PC-3 (cell line): ENCODE measurements at regions of chr1 and their contacts with region 1.

Region 1: DNA sequence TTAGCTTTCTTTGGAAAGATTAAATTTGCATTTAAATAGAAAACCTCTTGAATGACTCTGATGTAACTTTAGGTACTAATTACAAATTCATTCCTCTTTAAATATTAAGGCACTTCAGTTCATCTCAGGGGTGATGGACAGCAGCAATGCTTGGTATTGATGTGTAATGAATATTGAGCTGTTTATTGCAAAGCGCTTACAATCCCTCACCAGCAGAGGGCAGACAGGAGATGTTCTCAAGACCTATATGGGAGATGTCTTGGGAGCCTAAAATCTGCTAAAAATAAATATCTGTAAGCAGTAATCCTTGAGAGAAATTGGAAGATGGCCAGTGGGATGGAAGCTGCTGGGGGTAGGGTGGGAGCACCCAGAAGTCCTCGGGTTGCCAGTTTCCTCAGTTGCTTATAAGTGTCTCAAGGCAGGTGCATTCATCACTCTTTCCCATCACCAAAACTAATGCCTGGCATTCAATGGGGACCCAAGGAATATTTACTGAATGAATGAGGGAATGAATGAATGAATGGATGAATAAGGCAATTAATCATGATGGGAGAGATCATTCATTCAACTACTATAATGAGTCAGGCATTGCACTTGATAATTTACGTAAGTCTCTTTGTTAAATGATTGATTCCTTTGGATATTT is 2.3 kb downstream of the KLHDC8A start:
- DNase-seq: peak; percentile 84
- ATAC-seq: peak; percentile 61
- H3K4me3 ChIP-seq: no peak overlapping the region
- H3K27ac ChIP-seq: peak overlapping the region; percentile 52
- H3K4me1 ChIP-seq: peaks cover 18% of the 10 kb centered on the region
- H3K27me3 ChIP-seq: peaks cover 7% of the 10 kb centered on the region
- CTCF ChIP-seq: peak; percentile 95

Region 2: GRCh38 chr1:205335643-205336091 is 18.7 kb before region 1 on chr1:
- CTCF ChIA-PET with region 1: interaction called, 13 read pairs
- POLR2A ChIA-PET with region 1: no interaction called
- intact Hi-C with region 1: no loop called
- DNase-seq: peak; percentile 93
- ATAC-seq: peak; percentile 98
- H3K4me3 ChIP-seq: no peak overlapping the region
- H3K27ac ChIP-seq: no peak overlapping the region
- H3K4me1 ChIP-seq: no peaks in the 10 kb centered on the region
- H3K27me3 ChIP-seq: no peaks in the 10 kb centered on the region
- CTCF ChIP-seq: peak; percentile 99

Region 3: DNA sequence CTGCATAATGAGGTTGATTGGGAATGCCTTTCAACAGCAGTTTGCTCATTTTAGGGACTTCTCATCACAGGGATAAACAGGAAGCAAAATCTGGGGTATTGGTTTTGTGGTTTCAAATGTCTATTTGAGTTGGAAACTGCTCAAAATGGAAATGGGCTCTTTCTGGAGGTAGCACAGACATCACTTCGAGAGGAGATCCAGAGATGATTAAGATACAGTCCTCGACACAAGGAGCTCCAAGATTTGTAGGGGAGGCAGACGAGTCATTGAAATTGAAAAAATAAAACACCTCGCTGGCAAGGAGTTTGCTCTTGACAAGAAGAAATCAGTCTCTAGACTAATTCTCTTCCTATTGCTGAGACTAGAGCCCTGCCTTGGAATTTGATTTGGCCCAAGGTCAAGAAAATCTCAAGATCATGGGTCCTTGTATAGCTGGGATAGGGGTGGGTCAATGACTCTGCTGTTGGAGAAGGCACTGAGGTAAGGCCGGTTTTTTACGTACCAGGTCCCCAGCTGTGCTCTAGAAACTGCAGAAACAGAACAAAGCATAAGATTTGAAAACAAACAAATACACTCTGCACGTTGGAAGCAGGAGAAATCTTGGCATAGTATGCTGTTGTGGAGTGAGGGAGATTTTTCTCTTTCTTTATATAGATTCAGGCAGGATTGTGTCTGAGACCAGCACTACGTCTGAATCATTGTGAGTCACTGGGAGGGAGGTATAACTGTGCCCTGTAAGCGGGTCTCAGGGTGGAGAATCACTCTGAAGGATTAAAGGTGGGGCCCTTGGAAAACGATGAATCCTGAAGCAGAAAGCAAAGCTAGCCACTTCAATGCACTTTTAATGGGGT is 20.1 kb after region 1 on chr1:
- CTCF ChIA-PET with region 1: no interaction called
- POLR2A ChIA-PET with region 1: no interaction called
- intact Hi-C with region 1: loop called (anchors 1 kb)
- DNase-seq: peak; percentile 91
- ATAC-seq: peak; percentile 90
- H3K4me3 ChIP-seq: peak overlapping the region; percentile 54
- H3K27ac ChIP-seq: peak overlapping the region; percentile 85
- H3K4me1 ChIP-seq: peaks cover 40% of the 10 kb centered on the region
- H3K27me3 ChIP-seq: peaks cover 4% of the 10 kb centered on the region; the same call in 1 of the 2 replicates
- CTCF ChIP-seq: no peak

Region 4: GRCh38 chr1:205422993-205423625 is 68.7 kb after region 1 on chr1:
- CTCF ChIA-PET with region 1: interaction called, 6 read pairs
- POLR2A ChIA-PET with region 1: no interaction called
- intact Hi-C with region 1: loop called (anchors 2 kb)
- DNase-seq: peak; percentile 50
- ATAC-seq: peak; percentile 37; the same call in 1 of the 2 replicates
- H3K4me3 ChIP-seq: no peak overlapping the region
- H3K27ac ChIP-seq: no peak overlapping the region
- H3K4me1 ChIP-seq: no peaks in the 10 kb centered on the region
- H3K27me3 ChIP-seq: peaks cover 71% of the 10 kb centered on the region
- CTCF ChIP-seq: peak; percentile 67

Region 5: DNA sequence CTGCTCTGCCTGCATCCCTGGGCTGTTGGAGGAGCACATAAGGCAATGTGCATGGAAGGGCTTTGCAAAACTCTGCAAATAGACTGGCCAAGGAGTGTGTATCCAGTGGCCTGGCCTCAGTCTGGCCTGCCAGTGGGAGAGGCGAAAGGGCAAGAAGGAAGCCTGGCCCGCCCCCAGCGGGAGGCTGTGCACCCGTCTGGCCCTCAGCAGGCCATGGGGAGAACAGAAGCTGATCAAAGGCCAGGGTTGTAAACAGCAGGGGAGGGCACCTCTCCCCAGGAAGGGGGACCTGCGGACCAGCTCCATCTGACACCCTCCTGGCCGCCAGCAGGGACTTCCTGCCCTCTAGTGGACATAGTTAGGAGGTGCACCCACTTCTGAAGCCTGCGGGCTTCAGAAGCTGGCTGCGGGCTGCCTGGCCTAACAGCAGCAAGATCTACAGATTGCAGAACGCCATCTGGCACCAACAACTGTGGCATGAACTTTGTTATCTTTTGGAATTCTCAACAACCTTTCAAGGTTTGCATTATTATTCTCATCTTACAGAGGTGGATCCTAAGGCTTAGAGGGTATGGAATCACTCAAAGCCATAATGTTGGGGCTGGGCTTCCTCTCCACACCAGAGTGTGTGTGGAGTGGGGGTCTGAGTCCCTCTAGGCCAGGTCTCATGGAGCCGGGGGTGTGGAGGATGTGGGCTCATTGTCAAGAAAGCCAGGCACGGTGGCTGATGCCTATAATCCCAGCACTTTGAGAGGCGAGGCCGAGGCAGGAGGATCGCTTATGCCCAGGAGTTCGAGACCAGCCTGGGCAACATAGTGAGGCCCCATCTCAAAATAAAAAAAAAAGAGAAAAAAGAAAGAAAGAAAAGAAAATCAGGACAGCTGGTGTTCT is 131.2 kb after region 1 on chr1:
- CTCF ChIA-PET with region 1: interaction called, 45 read pairs
- POLR2A ChIA-PET with region 1: no interaction called
- intact Hi-C with region 1: loop called (anchors 1 kb)
- DNase-seq: peak; percentile 89
- ATAC-seq: peak; percentile 82
- H3K4me3 ChIP-seq: no peak overlapping the region
- H3K27ac ChIP-seq: no peak overlapping the region
- H3K4me1 ChIP-seq: no peaks in the 10 kb centered on the region
- H3K27me3 ChIP-seq: peaks cover 7% of the 10 kb centered on the region; the same call in 1 of the 2 replicates
- CTCF ChIP-seq: peak; percentile 99

Region 6: DNA sequence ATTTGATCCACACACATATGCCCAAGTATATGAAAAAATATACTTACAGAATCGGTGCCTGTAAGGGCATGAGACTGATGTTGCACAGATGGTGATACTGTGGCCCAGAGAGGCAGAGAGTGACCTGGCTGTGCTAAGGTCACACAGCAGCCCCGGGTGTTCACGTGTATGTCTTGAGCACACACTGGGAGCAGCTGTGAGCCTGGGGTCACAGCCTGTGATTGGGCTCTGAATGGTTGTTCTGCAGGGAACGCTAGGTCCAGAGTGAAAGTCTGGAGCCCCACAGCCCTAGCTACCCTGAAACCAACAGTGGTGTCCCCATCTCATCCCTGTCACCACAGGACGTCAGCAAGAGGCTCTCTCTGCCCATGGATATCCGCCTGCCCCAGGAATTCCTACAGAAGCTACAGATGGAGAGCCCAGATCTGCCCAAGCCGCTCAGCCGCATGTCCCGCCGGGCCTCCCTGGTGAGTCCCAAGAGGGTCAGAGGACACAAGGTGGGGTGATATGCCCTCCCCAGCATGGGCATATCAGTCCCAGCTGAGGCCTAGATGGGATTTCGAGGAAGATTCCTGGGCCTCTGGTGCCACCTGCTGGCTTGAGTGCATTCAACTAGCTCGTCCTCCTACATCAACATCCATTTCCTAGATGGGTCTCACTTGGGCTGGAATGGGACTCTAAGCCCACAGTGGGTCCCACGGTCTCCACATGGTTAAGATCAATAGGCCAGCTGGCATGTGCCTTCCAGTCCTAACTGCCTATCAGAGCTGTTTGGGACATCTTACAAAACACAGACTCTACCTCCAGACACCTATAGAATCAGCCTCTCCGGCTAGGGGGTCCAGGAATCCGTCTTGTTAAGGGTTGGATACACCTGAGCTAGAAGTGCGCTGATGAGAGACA is 169.8 kb after region 1 on chr1:
- CTCF ChIA-PET with region 1: interaction called, 25 read pairs
- POLR2A ChIA-PET with region 1: no interaction called
- intact Hi-C with region 1: loop called (anchors 1 kb)
- DNase-seq: peak; percentile 90
- ATAC-seq: peak; percentile 62
- H3K4me3 ChIP-seq: no peak overlapping the region
- H3K27ac ChIP-seq: no peak overlapping the region
- H3K4me1 ChIP-seq: peaks cover 6% of the 10 kb centered on the region; the same call in 1 of the 2 replicates
- H3K27me3 ChIP-seq: no peaks in the 10 kb centered on the region
- CTCF ChIP-seq: peak; percentile 97

Region 7: GRCh38 chr1:205664376-205665108 is 310.2 kb after region 1 on chr1:
- CTCF ChIA-PET with region 1: no interaction called
- POLR2A ChIA-PET with region 1: interaction called, 13 read pairs
- intact Hi-C with region 1: no loop called
- DNase-seq: peak; percentile 91
- ATAC-seq: peak; percentile 82
- H3K4me3 ChIP-seq: peak overlapping the region; percentile 45
- H3K27ac ChIP-seq: peak overlapping the region; percentile 82
- H3K4me1 ChIP-seq: peaks cover 58% of the 10 kb centered on the region
- H3K27me3 ChIP-seq: no peaks in the 10 kb centered on the region
- CTCF ChIP-seq: no peak